ENCODE measurements at regions of chr13 and their contacts with region 1.

Region 1: GRCh38 chr13:94351292-94351990 is 128.0 kb downstream of the DCT start:
- DNase-seq: peak; percentile 47
- H3K4me3 ChIP-seq: 0 out of 2 replicates have a peak overlapping the region, but pooled peaks have one; percentile 15
- H3K27ac ChIP-seq: peak overlapping the region; percentile 80
- H3K27me3 ChIP-seq: no peaks in the 10 kb centered on the region
- CTCF ChIP-seq: no peak

Region 2: DNA sequence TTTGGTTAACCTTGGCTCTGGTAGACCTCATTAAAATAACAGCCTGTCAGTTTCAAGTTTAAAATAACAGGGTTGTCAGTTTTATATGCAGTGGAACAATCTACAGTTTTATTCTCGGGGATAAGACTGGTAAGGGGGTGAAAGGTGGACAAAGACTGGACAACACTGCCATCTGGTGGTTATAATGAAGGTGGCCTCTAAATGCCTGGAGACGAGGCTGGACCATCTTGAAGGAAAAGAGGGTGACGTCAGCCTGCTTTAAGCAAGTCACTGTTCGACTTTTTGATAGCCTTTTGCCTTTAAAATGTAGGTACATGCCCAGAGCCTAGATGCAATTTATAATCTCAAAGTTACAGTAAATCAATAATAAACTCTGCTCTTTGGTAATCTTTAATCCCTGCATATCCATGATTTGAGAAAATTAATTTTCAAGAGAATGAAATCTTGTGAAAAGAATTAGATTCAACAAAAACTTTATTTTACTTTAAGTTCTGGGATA is 11.0 kb after region 1 on chr13:
- CTCF ChIA-PET with region 1: interaction called, 11 read pairs
- POLR2A ChIA-PET with region 1: no interaction called
- DNase-seq: peak; percentile 86
- H3K4me3 ChIP-seq: no peak overlapping the region
- H3K27ac ChIP-seq: no peak overlapping the region
- H3K27me3 ChIP-seq: no peaks in the 10 kb centered on the region
- CTCF ChIP-seq: peak; percentile 79

Measured in AG04450 (cell line).